ENCODE measurements at regions of chr22 and their contacts with region 1.

Region 1: GRCh38 chr22:39405346-39406085 is 5.9 kb downstream of the TAB1 start:
- DNase-seq: no peak
- ATAC-seq: peak; percentile 62 to 80
- H3K4me3 Mint-ChIP-seq: peak overlapping the region in 3 of 10 donors; percentile 0 to 19 (median 9)
- H3K27ac Mint-ChIP-seq: peak overlapping the region in 6 of 10 donors; percentile 9 to 46 (median 26)
- H3K4me1 Mint-ChIP-seq: peaks cover 34 to 88% (median 74%) of the 10 kb centered on the region in 4 donors
- H3K27me3 Mint-ChIP-seq: no peaks in the 10 kb centered on the region

Region 2: GRCh38 chr22:39349506-39349966 is 56.0 kb before region 1 on chr22:
- POLR2A ChIA-PET with region 1: interaction called, 16 read pairs
- DNase-seq: peak; percentile 17 to 73 (median 49)
- ATAC-seq: peak; percentile 50 to 61
- H3K4me3 Mint-ChIP-seq: peak overlapping the region; percentile 84 to 94 (median 90)
- H3K27ac Mint-ChIP-seq: peak overlapping the region; percentile 59 to 95 (median 89)
- H3K4me1 Mint-ChIP-seq: peaks cover 7 to 40% (median 26%) of the 10 kb centered on the region in 4 donors
- H3K27me3 Mint-ChIP-seq: peaks cover 0 to 3% (median 2%) of the 10 kb centered on the region in 5 donors

Region 3: DNA sequence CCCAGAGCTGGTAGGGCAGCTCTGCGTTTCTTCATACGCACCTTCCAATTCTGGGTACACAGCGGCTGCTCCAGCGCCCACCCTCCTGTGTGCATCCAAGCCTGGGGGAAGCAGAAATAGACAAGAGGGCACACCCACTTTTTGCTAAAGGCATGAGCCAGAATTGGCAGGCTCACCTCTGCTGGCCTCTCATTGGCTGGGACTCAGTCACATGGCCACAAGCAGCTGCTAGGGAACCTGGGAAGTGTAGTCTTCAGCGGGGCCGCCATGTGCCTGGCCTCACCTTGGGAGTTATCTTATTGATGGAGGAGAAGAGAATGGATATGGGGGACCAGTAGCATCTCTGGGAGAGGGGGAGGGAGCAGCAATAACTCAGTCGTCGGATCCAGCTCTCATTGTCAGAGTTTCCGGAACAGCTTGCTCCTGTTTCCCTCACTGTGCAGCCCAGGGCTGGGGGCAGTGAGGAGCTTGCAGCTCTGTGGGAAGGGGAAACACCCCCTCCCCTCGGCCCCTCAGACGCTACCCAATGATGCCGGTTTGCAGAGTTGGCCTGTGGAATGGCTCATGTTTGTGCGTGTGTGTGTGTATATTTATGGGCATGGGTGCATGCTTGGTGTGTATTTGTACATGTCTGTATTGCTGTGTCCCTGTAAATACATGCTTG is 84.8 kb after region 1 on chr22:
- POLR2A ChIA-PET with region 1: interaction called, 12 read pairs
- DNase-seq: peak; percentile 52 to 88 (median 75)
- ATAC-seq: peak; percentile 100
- H3K4me3 Mint-ChIP-seq: peak overlapping the region in 4 of 10 donors; percentile 51 to 81 (median 71)
- H3K27ac Mint-ChIP-seq: peak overlapping the region in 5 of 10 donors; percentile 25 to 82 (median 59)
- H3K4me1 Mint-ChIP-seq: peaks cover 9 to 16% (median 14%) of the 10 kb centered on the region in 4 donors
- H3K27me3 Mint-ChIP-seq: no peaks in the 10 kb centered on the region

Measured in naive thymus-derived CD8-positive, alpha-beta T cell (primary cell).